Dorsolateral prefrontal cortex (tissue), 120 donors: ENCODE measurements at regions of chr7 and their contacts with region 1.

Region 1: GRCh38 chr7:74083117-74083876 is at the start of gene LIMK1:
- DNase-seq: peak; percentile 62 to 87 (median 78)
- H3K4me3 ChIP-seq: peak within 1 kb of the TSS; percentile 51 to 86 (median 75)
- H3K27ac ChIP-seq: peak within 1 kb of the TSS in 56 of 59 donors; percentile 9 to 87 (median 69)
- H3K27me3 ChIP-seq: no peaks in the 10 kb centered on the region
- CTCF ChIP-seq: no peak
- total RNA-seq, gene LIMK1: 39.1 to 162 (median 111) TPM

Region 2: GRCh38 chr7:74101061-74101681 is 17.9 kb after region 1 on chr7:
- intact Hi-C with region 1: no loop called
- DNase-seq: no peak
- H3K4me3 ChIP-seq: no peak overlapping the region
- H3K27ac ChIP-seq: no peak overlapping the region
- H3K27me3 ChIP-seq: no peaks in the 10 kb centered on the region
- CTCF ChIP-seq: no peak

Region 3: GRCh38 chr7:74173866-74174605 is 90.7 kb after region 1 on chr7 and contains the start of gene EIF4H:
- intact Hi-C with region 1: loop called (anchors 5 kb)
- DNase-seq: peak; percentile 89 to 96 (median 93)
- H3K4me3 ChIP-seq: peak within 1 kb of the TSS; percentile 60 to 99 (median 95)
- H3K27ac ChIP-seq: peak within 1 kb of the TSS; percentile 65 to 98 (median 93)
- H3K27me3 ChIP-seq: no peaks in the 10 kb centered on the region
- CTCF ChIP-seq: peak in 20 of 56 donors; percentile 1 to 62 (median 28)
- total RNA-seq, gene EIF4H: 190 to 323 (median 261) TPM

Region 4: DNA sequence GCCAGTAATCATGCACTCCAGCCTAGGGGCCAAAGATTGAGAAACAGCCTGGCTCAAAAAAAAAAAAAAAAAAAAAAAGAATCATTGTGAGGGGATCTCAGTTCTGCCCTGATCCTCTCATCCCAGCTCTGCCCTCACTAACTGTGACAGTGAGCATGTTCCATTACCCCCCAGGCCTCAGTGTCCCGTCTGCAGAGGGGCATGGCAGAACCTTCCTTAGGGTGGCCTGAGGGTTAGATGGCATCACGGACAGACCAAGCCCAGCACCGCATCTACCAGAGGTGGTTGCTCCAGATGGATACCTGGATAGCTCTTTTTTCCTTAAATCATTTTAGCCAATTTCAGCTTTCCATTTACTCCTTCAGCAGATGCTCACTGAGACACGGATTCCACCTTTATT is 902.2 kb after region 1 on chr7:
- intact Hi-C with region 1: no loop called
- DNase-seq: no peak
- H3K4me3 ChIP-seq: no peak overlapping the region
- H3K27ac ChIP-seq: no peak overlapping the region
- H3K27me3 ChIP-seq: no peaks in the 10 kb centered on the region
- CTCF ChIP-seq: no peak